A549 (cell line): ENCODE measurements at regions of chr11 and their contacts with region 1.

Region 1: GRCh38 chr11:108647701-108648527 is 17.0 kb upstream of the DDX10 start:
- DNase-seq: peak; percentile 18 to 66
- ATAC-seq: peak; percentile 94 to 97
- H3K4me3 ChIP-seq: no peak overlapping the region
- H3K27ac ChIP-seq: no peak overlapping the region
- H3K4me1 ChIP-seq: no peaks in the 10 kb centered on the region
- CTCF ChIP-seq: peak; percentile 78
- EP300 ChIP-seq: no peak
- POLR2A ChIP-seq: no peak
- RAD21 ChIP-seq: peak; percentile 90 to 93

Region 2: GRCh38 chr11:108571001-108571400 is 76.9 kb before region 1 on chr11:
- CTCF ChIA-PET with region 1: no interaction called
- POLR2A ChIA-PET with region 1: no interaction called
- DNase-seq: no peak
- ATAC-seq: no peak
- H3K4me3 ChIP-seq: no peak overlapping the region
- H3K27ac ChIP-seq: no peak overlapping the region
- H3K4me1 ChIP-seq: no peaks in the 10 kb centered on the region
- CTCF ChIP-seq: no peak
- EP300 ChIP-seq: no peak
- POLR2A ChIP-seq: no peak
- RAD21 ChIP-seq: no peak

Region 3: GRCh38 chr11:108664730-108665525 is 17.0 kb after region 1 on chr11 and contains the start of gene DDX10:
- CTCF ChIA-PET with region 1: interaction called, 11 read pairs
- POLR2A ChIA-PET with region 1: no interaction called
- DNase-seq: peak; percentile 81 to 97
- ATAC-seq: peak; percentile 92 to 97
- H3K4me3 ChIP-seq: peak within 1 kb of the TSS; percentile 74
- H3K27ac ChIP-seq: peak within 1 kb of the TSS; percentile 78 to 91
- H3K4me1 ChIP-seq: peaks cover 15% of the 10 kb centered on the region; the same call in 2 of the 3 replicates
- CTCF ChIP-seq: no peak
- EP300 ChIP-seq: no peak
- POLR2A ChIP-seq: peak; percentile 48
- RAD21 ChIP-seq: no peak
- polyA plus RNA-seq, gene DDX10: 188 and 189 TPM in 2 replicates

Region 4: GRCh38 chr11:108933630-108934029 is 285.7 kb after region 1 on chr11:
- CTCF ChIA-PET with region 1: no interaction called
- POLR2A ChIA-PET with region 1: no interaction called
- DNase-seq: no peak
- ATAC-seq: no peak
- H3K4me3 ChIP-seq: no peak overlapping the region
- H3K27ac ChIP-seq: peak overlapping the region in 1 of 2 experiments; percentile 53; a peak in 3 of 6 replicates
- H3K4me1 ChIP-seq: peaks cover 48% of the 10 kb centered on the region
- CTCF ChIP-seq: no peak
- EP300 ChIP-seq: no peak
- POLR2A ChIP-seq: no peak
- RAD21 ChIP-seq: no peak